ENCODE measurements at regions of chr10 and their contacts with region 1.

Region 1: GRCh38 chr10:112565434-112566053 is 118.5 kb downstream of the VTI1A start:
- DNase-seq: peak; percentile 83
- ATAC-seq: peak; percentile 54
- H3K4me3 ChIP-seq: no peak overlapping the region
- H3K27ac ChIP-seq: no peak overlapping the region
- H3K4me1 ChIP-seq: peaks cover 21% of the 10 kb centered on the region
- H3K27me3 ChIP-seq: no peaks in the 10 kb centered on the region
- CTCF ChIP-seq: peak; percentile 65

Region 2: DNA sequence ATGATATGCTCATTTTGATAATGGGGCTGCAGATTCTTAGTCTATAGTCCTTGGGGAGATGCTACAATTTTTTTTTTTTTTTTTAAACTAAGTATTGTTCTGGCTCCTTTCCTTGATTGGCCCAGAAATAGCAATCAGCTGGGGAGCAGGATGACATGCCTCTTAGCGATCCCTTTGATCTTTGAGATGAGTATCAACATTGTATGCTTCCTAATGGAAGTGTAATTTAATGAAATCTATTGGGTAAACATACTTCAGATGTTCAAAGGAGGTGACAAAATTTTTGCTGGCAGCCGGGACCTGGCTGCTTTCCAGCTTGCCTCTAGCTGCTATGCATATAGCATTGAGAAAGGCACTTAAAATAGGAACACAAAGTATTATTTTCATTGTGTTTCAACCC is 75.0 kb before region 1 on chr10:
- CTCF ChIA-PET with region 1: no interaction called
- POLR2A ChIA-PET with region 1: interaction called, 3 read pairs
- intact Hi-C with region 1: loop called (anchors 2 kb)
- DNase-seq: peak; percentile 9
- ATAC-seq: no peak
- H3K4me3 ChIP-seq: no peak overlapping the region
- H3K27ac ChIP-seq: no peak overlapping the region
- H3K4me1 ChIP-seq: no peaks in the 10 kb centered on the region
- H3K27me3 ChIP-seq: no peaks in the 10 kb centered on the region
- CTCF ChIP-seq: no peak

Region 3: DNA sequence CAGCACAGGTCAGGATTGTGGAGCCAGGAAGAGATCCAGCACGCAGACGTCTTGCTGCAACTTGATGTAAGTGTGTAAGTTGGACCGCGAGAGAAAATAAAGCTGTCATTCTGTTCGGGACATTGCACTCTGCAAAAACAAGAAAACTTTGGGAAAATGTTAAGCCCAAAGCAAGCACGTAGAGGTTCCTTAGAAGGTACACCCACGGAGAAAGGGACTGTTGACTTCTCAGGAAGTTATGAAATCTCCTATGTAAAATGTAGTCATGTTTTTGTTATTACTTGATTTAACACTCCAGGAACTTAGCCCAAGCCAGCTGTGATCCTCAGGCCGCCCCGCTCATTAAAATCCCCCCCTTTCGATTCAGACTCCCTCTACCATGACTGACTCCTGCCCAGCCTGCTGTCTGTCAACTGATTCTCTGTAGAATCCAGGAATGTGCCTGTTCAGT is 188.4 kb after region 1 on chr10:
- CTCF ChIA-PET with region 1: no interaction called
- POLR2A ChIA-PET with region 1: no interaction called
- intact Hi-C with region 1: no loop called
- DNase-seq: no peak
- ATAC-seq: no peak
- H3K4me3 ChIP-seq: no peak overlapping the region
- H3K27ac ChIP-seq: no peak overlapping the region
- H3K4me1 ChIP-seq: peaks cover 11% of the 10 kb centered on the region; the same call in 1 of the 2 replicates
- H3K27me3 ChIP-seq: no peaks in the 10 kb centered on the region
- CTCF ChIP-seq: no peak

Region 4: DNA sequence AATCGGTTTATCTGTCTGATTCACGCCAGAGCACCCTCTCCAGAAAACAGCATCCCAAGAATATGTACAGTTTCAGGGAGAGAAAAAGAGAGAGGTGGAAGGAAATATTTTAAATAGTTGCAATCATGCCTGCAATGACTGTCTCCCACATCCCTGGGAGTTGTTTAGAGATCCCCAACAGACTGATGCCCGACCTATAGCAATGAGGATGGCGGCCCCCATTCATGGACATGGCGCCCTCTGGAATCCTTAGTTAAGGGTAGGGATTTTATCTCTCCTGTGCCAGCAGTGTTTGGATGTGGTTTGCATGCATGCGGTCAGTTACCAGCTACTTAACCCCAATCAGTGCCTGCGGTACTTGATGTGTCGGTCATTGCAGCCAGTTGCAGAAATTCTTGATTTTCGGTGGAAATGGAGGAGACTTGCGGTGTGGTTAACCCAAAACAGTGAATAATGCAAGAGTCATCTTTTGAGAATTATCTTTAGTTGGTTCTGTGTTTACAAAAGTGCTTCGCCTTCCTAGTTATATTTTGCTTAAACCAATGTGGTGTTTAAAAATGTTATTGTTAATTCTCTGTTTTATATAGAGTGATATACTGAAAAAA is 198.5 kb after region 1 on chr10:
- CTCF ChIA-PET with region 1: no interaction called
- POLR2A ChIA-PET with region 1: no interaction called
- intact Hi-C with region 1: no loop called
- DNase-seq: peak; percentile 86
- ATAC-seq: peak; percentile 72
- H3K4me3 ChIP-seq: no peak overlapping the region
- H3K27ac ChIP-seq: peak overlapping the region; percentile 13
- H3K4me1 ChIP-seq: peaks cover 57% of the 10 kb centered on the region
- H3K27me3 ChIP-seq: no peaks in the 10 kb centered on the region
- CTCF ChIP-seq: peak; percentile 23; the same call in 1 of the 2 replicates

Region 5: GRCh38 chr10:113108212-113108835 is 542.8 kb after region 1 on chr10:
- CTCF ChIA-PET with region 1: no interaction called
- POLR2A ChIA-PET with region 1: no interaction called
- intact Hi-C with region 1: no loop called
- DNase-seq: peak; percentile 13
- ATAC-seq: no peak
- H3K4me3 ChIP-seq: no peak overlapping the region
- H3K27ac ChIP-seq: no peak overlapping the region
- H3K4me1 ChIP-seq: peaks cover 5% of the 10 kb centered on the region; the same call in 1 of the 2 replicates
- H3K27me3 ChIP-seq: no peaks in the 10 kb centered on the region
- CTCF ChIP-seq: peak; percentile 70

Measured in PC-3 (cell line).